ENCODE measurements at regions of chr22 and their contacts with region 1.

Region 1: DNA sequence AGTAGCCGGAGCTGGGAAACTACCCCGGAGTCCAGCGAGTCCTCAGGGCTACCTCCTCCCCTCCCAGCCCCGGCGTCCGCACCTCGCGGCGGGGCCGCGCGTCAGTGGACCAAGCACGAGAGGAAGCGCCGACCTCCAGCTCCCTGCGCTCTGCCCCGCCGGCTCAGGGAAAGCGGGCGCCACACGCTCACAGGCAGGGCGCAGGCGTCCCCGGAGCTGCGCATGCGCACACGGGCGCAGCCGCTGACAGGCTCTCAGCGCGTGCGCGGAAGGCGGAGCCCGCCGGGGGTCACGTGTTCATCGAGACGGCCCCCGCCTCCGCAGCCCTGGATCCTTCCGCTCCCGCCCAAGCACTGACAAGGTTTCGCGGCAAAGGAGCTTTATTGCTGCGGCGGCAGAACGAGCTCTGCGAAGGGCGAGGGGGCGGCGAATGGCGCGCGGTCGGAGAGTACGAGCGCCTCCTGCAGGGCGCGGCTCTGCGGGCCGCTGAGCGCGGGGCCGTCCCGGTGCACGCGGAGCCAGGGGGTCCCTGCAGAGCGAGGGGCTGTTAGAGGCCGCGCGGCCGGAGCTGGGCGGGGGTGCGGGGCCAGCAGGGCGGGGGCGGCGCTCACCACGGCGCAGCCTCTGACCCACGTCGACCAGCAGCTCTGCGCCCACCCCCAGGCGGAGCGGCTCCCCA is at the start of gene SCO2:
- DNase-seq: peak; percentile 98
- ATAC-seq: peak; percentile 54
- H3K4me3 ChIP-seq: peak within 1 kb of the TSS; percentile 4 to 82 (median 69)
- H3K4me3 Mint-ChIP-seq: peak within 1 kb of the TSS; percentile 90
- H3K27ac ChIP-seq: peak within 1 kb of the TSS; percentile 83 to 90
- H3K27ac Mint-ChIP-seq: peak within 1 kb of the TSS; percentile 91
- H3K4me1 ChIP-seq: peaks cover 16 to 52% of the 10 kb centered on the region in 2 donors
- H3K4me1 Mint-ChIP-seq: peaks cover 34% of the 10 kb centered on the region
- H3K27me3 ChIP-seq: no peaks in the 10 kb centered on the region
- H3K27me3 Mint-ChIP-seq: no peaks in the 10 kb centered on the region
- CTCF ChIP-seq: no peak
- total RNA-seq, gene SCO2: 1.1 TPM in 2 replicates

Region 2: GRCh38 chr22:50250555-50251476 is 274.7 kb before region 1 on chr22 and contains the start of gene HDAC10:
- CTCF ChIA-PET with region 1: interaction called, 16 read pairs
- POLR2A ChIA-PET with region 1: interaction called, 4 read pairs
- intact Hi-C with region 1: no loop called
- DNase-seq: peak; percentile 85
- ATAC-seq: peak; percentile 84
- H3K4me3 ChIP-seq: peak within 1 kb of the TSS; percentile 56 to 81 (median 79)
- H3K4me3 Mint-ChIP-seq: peak within 1 kb of the TSS; percentile 86
- H3K27ac ChIP-seq: peak within 1 kb of the TSS; percentile 41 to 49
- H3K27ac Mint-ChIP-seq: peak within 1 kb of the TSS; percentile 76
- H3K4me1 ChIP-seq: peaks cover 15 to 44% of the 10 kb centered on the region in 2 donors
- H3K4me1 Mint-ChIP-seq: peaks cover 24% of the 10 kb centered on the region
- H3K27me3 ChIP-seq: no peaks in the 10 kb centered on the region
- H3K27me3 Mint-ChIP-seq: no peaks in the 10 kb centered on the region
- CTCF ChIP-seq: no peak
- total RNA-seq, gene HDAC10: 120 and 136 TPM in 2 replicates

Region 3: GRCh38 chr22:50474668-50475492 is 50.6 kb before region 1 on chr22 and contains the start of gene SBF1:
- CTCF ChIA-PET with region 1: interaction called, 20 read pairs
- POLR2A ChIA-PET with region 1: interaction called, 22 read pairs
- intact Hi-C with region 1: loop called (anchors 5 kb)
- DNase-seq: peak; percentile 93
- ATAC-seq: peak; percentile 78
- H3K4me3 ChIP-seq: peak within 1 kb of the TSS; percentile 51 to 81 (median 68)
- H3K4me3 Mint-ChIP-seq: peak within 1 kb of the TSS; percentile 89
- H3K27ac ChIP-seq: peak within 1 kb of the TSS; percentile 20 to 90
- H3K27ac Mint-ChIP-seq: peak within 1 kb of the TSS; percentile 92
- H3K4me1 ChIP-seq: peaks cover 46 to 51% of the 10 kb centered on the region in 2 donors
- H3K4me1 Mint-ChIP-seq: peaks cover 48% of the 10 kb centered on the region
- H3K27me3 ChIP-seq: no peaks in the 10 kb centered on the region
- H3K27me3 Mint-ChIP-seq: peaks cover 2% of the 10 kb centered on the region
- CTCF ChIP-seq: no peak
- total RNA-seq, gene SBF1: 254 TPM in 2 replicates

Region 4: DNA sequence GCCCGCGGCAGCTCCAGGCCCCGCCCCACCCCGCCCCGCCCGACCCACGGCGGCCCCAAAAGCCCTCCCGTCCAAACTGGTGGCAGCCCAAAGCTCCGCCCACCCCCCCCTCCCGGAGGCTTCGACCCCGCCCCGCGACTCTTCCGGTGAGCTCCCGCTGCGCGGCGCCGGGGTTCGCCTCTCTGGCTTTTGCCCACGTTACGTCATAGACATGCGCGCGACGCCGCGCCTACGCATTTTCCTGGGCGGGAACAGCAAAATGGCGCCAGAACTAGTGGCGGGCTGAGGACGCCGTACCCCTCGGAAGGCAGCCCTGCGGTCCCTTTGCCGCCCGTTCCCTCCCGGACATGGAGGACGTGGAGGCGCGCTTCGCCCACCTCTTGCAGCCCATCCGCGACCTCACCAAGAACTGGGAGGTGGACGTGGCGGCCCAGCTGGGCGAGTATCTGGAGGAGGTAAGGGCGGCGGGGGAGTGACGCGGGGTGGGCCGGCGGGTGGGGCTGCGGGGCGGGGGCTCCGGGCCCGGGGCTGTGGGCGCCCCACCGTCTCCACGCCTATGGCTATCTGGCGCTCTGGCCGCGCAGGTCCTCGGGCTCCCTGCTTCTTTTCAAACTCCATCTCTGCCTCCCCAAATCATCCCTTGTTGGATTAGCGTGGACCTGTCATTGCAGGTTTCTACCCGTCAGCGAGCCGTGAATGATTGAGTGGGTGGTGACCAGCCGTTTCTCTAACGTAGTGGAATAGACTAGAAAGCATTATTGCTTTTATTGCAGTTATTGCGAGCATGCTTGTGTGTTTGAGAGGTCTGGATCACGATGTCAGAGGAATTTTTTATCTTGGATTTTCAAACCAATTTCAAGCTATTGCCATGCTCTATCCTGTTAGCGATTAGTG is 17.3 kb before region 1 on chr22 and contains the start of gene NCAPH2:
- CTCF ChIA-PET with region 1: interaction called, 71 read pairs
- POLR2A ChIA-PET with region 1: interaction called, 35 read pairs
- intact Hi-C with region 1: loop called (anchors 1 kb)
- DNase-seq: peak; percentile 98
- ATAC-seq: peak; percentile 71
- H3K4me3 ChIP-seq: peak within 1 kb of the TSS; percentile 75 to 92 (median 91)
- H3K4me3 Mint-ChIP-seq: peak within 1 kb of the TSS; percentile 95
- H3K27ac ChIP-seq: peak within 1 kb of the TSS; percentile 88 to 92
- H3K27ac Mint-ChIP-seq: peak within 1 kb of the TSS; percentile 98
- H3K4me1 ChIP-seq: peaks cover 19 to 29% of the 10 kb centered on the region in 2 donors
- H3K4me1 Mint-ChIP-seq: peaks cover 28% of the 10 kb centered on the region
- H3K27me3 ChIP-seq: no peaks in the 10 kb centered on the region
- H3K27me3 Mint-ChIP-seq: no peaks in the 10 kb centered on the region
- CTCF ChIP-seq: no peak
- total RNA-seq, gene NCAPH2: 71.5 and 76.9 TPM in 2 replicates

Region 5: GRCh38 chr22:50544078-50544745 is 18.7 kb after region 1 on chr22:
- CTCF ChIA-PET with region 1: interaction called, 81 read pairs
- POLR2A ChIA-PET with region 1: interaction called, 104 read pairs
- intact Hi-C with region 1: loop called (anchors 2 kb)
- DNase-seq: peak; percentile 90
- ATAC-seq: peak; percentile 46
- H3K4me3 ChIP-seq: peak overlapping the region in 4 of 5 experiments; percentile 12 to 49 (median 33)
- H3K4me3 Mint-ChIP-seq: peak overlapping the region; percentile 45
- H3K27ac ChIP-seq: peak overlapping the region; percentile 72 to 75
- H3K27ac Mint-ChIP-seq: peak overlapping the region; percentile 90
- H3K4me1 ChIP-seq: peaks cover 42 to 63% of the 10 kb centered on the region in 2 donors
- H3K4me1 Mint-ChIP-seq: peaks cover 46% of the 10 kb centered on the region
- H3K27me3 ChIP-seq: no peaks in the 10 kb centered on the region
- H3K27me3 Mint-ChIP-seq: no peaks in the 10 kb centered on the region
- CTCF ChIP-seq: peak; percentile 79

Region 6: GRCh38 chr22:50582562-50583293 is 57.2 kb after region 1 on chr22 and contains the start of gene CHKB:
- CTCF ChIA-PET with region 1: interaction called, 5 read pairs
- POLR2A ChIA-PET with region 1: interaction called, 12 read pairs
- intact Hi-C with region 1: loop called (anchors 1 kb)
- DNase-seq: peak; percentile 98
- ATAC-seq: peak; percentile 94
- H3K4me3 ChIP-seq: peak within 1 kb of the TSS; percentile 58 to 91 (median 80)
- H3K4me3 Mint-ChIP-seq: peak within 1 kb of the TSS; percentile 89
- H3K27ac ChIP-seq: peak within 1 kb of the TSS; percentile 82 to 96
- H3K27ac Mint-ChIP-seq: peak within 1 kb of the TSS; percentile 93
- H3K4me1 ChIP-seq: peaks cover 14 to 18% of the 10 kb centered on the region in 2 donors
- H3K4me1 Mint-ChIP-seq: peaks cover 24% of the 10 kb centered on the region
- H3K27me3 ChIP-seq: no peaks in the 10 kb centered on the region
- H3K27me3 Mint-ChIP-seq: no peaks in the 10 kb centered on the region
- CTCF ChIP-seq: no peak
- total RNA-seq, gene CHKB: 238 and 239 TPM in 2 replicates